Heart right ventricle (tissue), 16 donors: ENCODE measurements at regions of chr19 and their contacts with region 1.

Region 1: DNA sequence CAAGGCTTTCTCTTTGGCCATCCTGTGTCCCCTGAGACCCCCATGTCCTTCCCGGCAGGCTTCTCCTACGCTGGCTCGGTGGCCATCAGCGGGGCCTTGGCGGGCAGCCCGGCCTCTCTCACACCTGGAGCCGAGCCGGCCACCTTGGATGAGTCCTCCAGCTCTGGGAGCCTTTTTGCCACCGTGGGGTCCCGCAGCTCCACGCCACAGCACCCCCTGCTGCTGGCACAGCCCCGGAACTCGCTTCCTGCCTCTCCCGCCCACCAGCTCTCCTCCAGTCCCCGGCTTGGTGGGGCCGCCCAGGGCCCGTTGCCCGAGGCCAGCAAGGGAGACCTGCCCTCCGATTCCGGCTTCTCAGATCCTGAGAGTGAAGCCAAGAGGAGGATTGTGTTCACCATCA is 14.2 kb downstream of the PLEKHJ1 start:
- DNase-seq: no peak
- ATAC-seq: peak in 2 of 8 donors; percentile 4 to 14
- H3K4me3 ChIP-seq: no peak overlapping the region
- H3K27ac ChIP-seq: peak overlapping the region in 1 of 10 donors; percentile 21
- H3K4me1 ChIP-seq: peaks cover 0 to 14% (median 5%) of the 10 kb centered on the region in 9 donors
- H3K27me3 ChIP-seq: no peaks in the 10 kb centered on the region
- CTCF ChIP-seq: peak in 7 of 9 donors; percentile 9 to 40 (median 28)

Region 2: GRCh38 chr19:2061495-2062381 is 160.2 kb before region 1 on chr19:
- intact Hi-C with region 1: no loop called
- DNase-seq: peak; percentile 99
- ATAC-seq: peak; percentile 84 to 94 (median 88)
- H3K4me3 ChIP-seq: peak overlapping the region; percentile 37 to 92 (median 64)
- H3K27ac ChIP-seq: peak overlapping the region; percentile 97 to 100 (median 100)
- H3K4me1 ChIP-seq: peaks cover 26 to 77% (median 53%) of the 10 kb centered on the region in 9 donors
- H3K27me3 ChIP-seq: no peaks in the 10 kb centered on the region
- CTCF ChIP-seq: peak in 3 of 9 donors; percentile 8 to 29 (median 23)

Region 3: DNA sequence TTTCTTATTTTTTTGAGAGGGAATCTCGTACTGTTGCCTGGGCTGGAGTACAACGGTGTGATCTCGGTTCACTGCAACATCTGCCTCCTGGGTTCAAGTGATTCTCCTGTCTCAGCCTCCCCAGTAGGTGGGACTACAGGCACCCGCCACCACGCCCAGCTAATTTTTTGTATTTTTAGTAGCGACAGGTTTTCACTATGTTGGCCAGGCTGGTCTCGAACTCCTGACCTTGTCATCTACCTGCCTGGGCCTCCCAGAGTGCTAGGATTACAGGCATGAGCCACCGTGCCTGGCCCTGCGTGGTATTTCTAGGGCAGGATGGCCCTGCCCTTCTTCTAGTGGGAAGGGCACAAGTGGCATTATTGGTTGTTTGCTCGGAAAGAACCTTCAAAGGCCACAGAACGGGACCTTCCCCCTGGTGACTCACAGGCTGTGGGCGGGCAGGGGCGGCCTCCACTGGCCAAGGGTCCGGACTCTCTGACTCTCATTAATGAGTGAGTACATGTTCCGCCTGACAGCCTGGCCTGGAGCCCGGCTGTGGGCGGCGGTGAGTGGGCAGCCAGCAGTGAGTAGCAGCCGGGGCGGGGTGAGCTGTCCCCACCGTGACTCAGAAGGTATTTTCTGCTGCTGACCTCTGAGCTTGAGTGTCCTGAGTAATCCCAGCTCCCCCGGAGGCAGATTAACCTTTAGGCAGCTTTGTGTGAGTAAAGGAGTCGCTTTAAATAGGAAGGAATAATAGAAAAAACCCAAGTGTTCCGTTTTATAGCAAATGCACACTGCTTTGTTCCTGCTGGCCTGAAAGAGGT is 53.1 kb before region 1 on chr19:
- intact Hi-C with region 1: loop called in 1 of 10 experiments (anchors 10 kb)
- DNase-seq: peak; percentile 94 to 96
- ATAC-seq: peak; percentile 83 to 95 (median 92)
- H3K4me3 ChIP-seq: peak overlapping the region in 6 of 10 donors; percentile 22 to 35 (median 26)
- H3K27ac ChIP-seq: peak overlapping the region; percentile 80 to 95 (median 92)
- H3K4me1 ChIP-seq: peaks cover 59 to 93% (median 86%) of the 10 kb centered on the region in 9 donors
- H3K27me3 ChIP-seq: no peaks in the 10 kb centered on the region
- CTCF ChIP-seq: peak in 1 of 9 donors; percentile 39

Region 4: DNA sequence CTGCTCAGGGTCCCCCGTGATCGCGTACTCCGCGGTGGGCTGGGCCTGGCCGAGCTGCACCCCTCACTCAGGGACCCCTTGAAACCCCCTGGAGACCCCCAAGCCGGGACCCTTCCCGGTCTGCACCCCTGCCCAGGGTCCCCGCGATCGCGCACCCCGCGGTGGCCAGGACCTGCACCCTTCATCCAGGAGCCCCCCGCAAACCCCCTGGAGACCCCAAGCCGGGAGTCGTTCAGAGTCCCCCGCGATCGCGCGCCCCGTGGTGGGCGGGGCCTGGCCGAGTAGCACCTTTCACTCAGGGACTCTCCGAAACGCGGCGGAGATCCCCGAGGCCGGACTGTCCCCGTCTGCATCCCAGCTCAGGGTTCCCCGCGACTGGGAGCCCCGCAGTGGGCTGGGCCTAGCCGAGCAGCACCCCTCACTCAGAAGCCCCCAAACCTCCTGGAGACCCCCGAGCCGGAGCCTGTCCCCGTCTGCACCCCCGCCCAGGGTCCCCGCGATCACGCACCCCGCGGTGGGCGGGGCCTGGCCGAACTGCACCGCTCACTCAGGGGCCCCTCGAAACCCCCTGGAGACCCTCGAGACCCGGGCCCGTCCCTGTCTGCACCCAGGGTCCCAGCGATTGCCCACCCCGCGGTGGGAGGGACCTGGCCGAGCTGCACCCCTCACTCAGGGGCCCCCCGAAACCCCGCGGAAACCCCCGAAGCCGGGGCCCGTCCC is 234.1 kb after region 1 on chr19:
- intact Hi-C with region 1: no loop called
- DNase-seq: peak; percentile 29 to 39
- ATAC-seq: peak in 6 of 8 donors; percentile 3 to 50 (median 10)
- H3K4me3 ChIP-seq: peak overlapping the region; percentile 71 to 99 (median 91)
- H3K27ac ChIP-seq: peak overlapping the region in 8 of 10 donors; percentile 41 to 78 (median 60)
- H3K4me1 ChIP-seq: peaks cover 5 to 18% (median 15%) of the 10 kb centered on the region in 9 donors
- H3K27me3 ChIP-seq: no peaks in the 10 kb centered on the region
- CTCF ChIP-seq: no peak